Heart right ventricle (tissue), 16 donors: ENCODE measurements at regions of chr4 and their contacts with region 1.

Region 1: GRCh38 chr4:87006676-87007527 is 72.1 kb downstream of the AFF1 start:
- DNase-seq: peak; percentile 93
- ATAC-seq: peak; percentile 92 to 98 (median 95)
- H3K4me3 ChIP-seq: peak overlapping the region; percentile 72 to 90 (median 79)
- H3K27ac ChIP-seq: peak overlapping the region; percentile 97 to 99 (median 98)
- H3K4me1 ChIP-seq: peaks cover 4 to 56% (median 48%) of the 10 kb centered on the region in 9 donors
- H3K27me3 ChIP-seq: no peaks in the 10 kb centered on the region
- CTCF ChIP-seq: peak in 5 of 9 donors; percentile 5 to 56 (median 31)

Region 2: GRCh38 chr4:86530183-86530582 is 476.7 kb before region 1 on chr4:
- intact Hi-C with region 1: no loop called
- DNase-seq: no peak
- ATAC-seq: no peak
- H3K4me3 ChIP-seq: no peak overlapping the region
- H3K27ac ChIP-seq: no peak overlapping the region
- H3K4me1 ChIP-seq: no peaks in the 10 kb centered on the region
- H3K27me3 ChIP-seq: no peaks in the 10 kb centered on the region
- CTCF ChIP-seq: no peak

Region 3: DNA sequence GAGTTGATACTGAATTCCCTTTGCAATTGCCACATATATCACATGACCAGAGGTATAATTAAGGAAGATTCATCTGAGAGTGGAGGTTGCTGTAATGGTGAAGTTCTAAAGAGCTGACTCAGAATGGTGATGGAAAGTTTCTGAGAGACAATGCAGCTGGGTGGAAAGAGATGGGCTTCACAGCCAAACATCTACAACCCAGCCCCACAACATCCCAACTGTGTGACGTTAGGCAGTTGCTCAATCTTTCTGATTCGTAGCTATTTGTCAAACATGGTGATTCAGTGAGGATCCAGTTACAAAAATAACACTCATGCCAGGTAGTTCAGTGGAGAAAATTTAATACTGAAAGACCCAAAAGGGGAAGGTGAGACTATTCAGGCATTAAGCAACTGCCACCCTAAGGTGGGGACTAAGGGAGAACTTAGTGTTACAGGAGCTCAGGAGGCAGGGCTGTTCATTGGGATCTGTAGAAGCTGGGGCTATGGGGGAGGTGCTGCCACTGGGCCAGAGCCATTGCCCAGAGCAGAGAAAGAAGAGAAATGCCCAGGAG is 79.0 kb before region 1 on chr4:
- intact Hi-C with region 1: loop called in 1 of 10 experiments (anchors 5 kb)
- DNase-seq: no peak
- ATAC-seq: peak in 5 of 8 donors; percentile 34 to 93 (median 56)
- H3K4me3 ChIP-seq: no peak overlapping the region
- H3K27ac ChIP-seq: peak overlapping the region in 1 of 10 donors; percentile 52
- H3K4me1 ChIP-seq: peaks cover 0 to 29% (median 0%) of the 10 kb centered on the region in 9 donors
- H3K27me3 ChIP-seq: no peaks in the 10 kb centered on the region
- CTCF ChIP-seq: no peak

Region 4: GRCh38 chr4:86948276-86948675 is 58.6 kb before region 1 on chr4:
- intact Hi-C with region 1: loop called in 2 of 10 experiments (anchors 5 kb)
- DNase-seq: no peak
- ATAC-seq: no peak
- H3K4me3 ChIP-seq: no peak overlapping the region
- H3K27ac ChIP-seq: peak overlapping the region in 2 of 10 donors; percentile 16 to 42
- H3K4me1 ChIP-seq: peaks cover 4 to 43% (median 27%) of the 10 kb centered on the region in 9 donors
- H3K27me3 ChIP-seq: no peaks in the 10 kb centered on the region
- CTCF ChIP-seq: no peak

Region 5: GRCh38 chr4:87044511-87045233 is 37.8 kb after region 1 on chr4:
- intact Hi-C with region 1: loop called in 2 of 10 experiments (anchors 5 kb)
- DNase-seq: peak in 1 of 2 donors; percentile 61
- ATAC-seq: peak in 7 of 8 donors; percentile 45 to 77 (median 70)
- H3K4me3 ChIP-seq: peak overlapping the region in 7 of 10 donors; percentile 20 to 45 (median 36)
- H3K27ac ChIP-seq: peak overlapping the region; percentile 55 to 95 (median 86)
- H3K4me1 ChIP-seq: peaks cover 18 to 96% (median 87%) of the 10 kb centered on the region in 9 donors
- H3K27me3 ChIP-seq: no peaks in the 10 kb centered on the region
- CTCF ChIP-seq: no peak

Region 6: GRCh38 chr4:87078987-87079486 is 72.1 kb after region 1 on chr4:
- intact Hi-C with region 1: loop called in 6 of 10 experiments (anchors 2 to 10 kb)
- DNase-seq: no peak
- ATAC-seq: peak; percentile 57 to 85 (median 74)
- H3K4me3 ChIP-seq: peak overlapping the region in 5 of 10 donors; percentile 2 to 22 (median 14)
- H3K27ac ChIP-seq: peak overlapping the region; percentile 26 to 88 (median 76)
- H3K4me1 ChIP-seq: peaks cover 11 to 100% (median 91%) of the 10 kb centered on the region in 9 donors
- H3K27me3 ChIP-seq: no peaks in the 10 kb centered on the region
- CTCF ChIP-seq: no peak

Region 7: DNA sequence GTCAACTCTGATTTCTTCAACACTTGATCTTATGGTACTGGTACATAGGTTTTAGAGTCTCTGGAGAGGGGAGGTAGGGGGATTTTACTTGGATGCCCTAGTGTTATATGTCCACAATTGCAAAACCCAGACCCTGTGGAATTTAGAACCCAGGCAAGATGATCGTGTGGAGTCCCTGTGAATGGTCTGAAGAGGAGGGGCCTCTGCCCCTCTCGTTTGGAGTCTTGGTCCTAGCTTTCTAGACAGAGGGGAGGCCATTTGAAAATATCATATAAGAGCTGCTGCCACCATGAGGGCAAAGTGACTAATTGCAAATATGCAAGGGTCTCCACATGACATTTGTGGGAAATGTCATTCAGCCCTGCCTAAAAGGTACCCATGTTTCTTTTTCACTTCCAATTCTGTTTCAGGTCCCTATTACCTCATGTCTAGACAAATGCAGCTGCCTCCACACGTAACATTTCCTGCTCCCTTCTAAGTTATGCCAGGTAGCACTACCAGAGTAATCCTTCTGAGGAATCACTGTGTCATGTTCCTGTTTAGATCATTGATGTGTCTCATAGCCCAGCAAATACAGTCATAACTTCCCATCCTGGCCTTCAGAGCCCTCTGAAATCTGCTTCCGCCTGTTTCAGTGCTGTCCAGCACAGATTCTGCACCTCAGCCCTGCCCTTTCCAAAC is 86.7 kb after region 1 on chr4:
- intact Hi-C with region 1: loop called in 7 of 10 experiments (anchors 2 to 10 kb)
- DNase-seq: peak in 1 of 2 donors; percentile 44
- ATAC-seq: peak; percentile 45 to 89 (median 80)
- H3K4me3 ChIP-seq: no peak overlapping the region
- H3K27ac ChIP-seq: peak overlapping the region in 7 of 10 donors; percentile 4 to 52 (median 25)
- H3K4me1 ChIP-seq: peaks cover 4 to 50% (median 35%) of the 10 kb centered on the region in 9 donors
- H3K27me3 ChIP-seq: no peaks in the 10 kb centered on the region
- CTCF ChIP-seq: peak; percentile 48 to 79 (median 70)